ENCODE measurements at regions of chr13 and their contacts with region 1.

Region 1: DNA sequence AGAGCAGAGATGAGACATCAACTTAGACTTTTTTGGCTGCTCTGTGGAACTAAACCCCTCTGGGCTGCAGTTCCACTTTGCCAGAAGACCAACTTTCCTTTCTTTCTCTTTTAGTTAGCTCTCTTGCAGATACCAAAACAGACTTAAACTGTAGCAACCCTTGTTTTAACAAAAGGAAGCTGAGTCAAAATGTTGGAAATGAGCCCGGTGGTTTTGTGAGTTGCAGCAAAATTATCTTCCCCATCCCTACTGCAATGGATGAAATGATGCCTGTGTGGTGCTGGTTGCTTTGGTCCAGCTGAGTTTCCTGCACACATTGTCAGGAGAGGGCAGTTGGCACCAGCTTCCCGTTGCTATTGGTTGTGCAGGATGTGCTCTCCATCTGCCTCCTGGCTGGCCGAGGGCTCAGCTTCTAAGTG is 115.3 kb downstream of the LRCH1 start:
- DNase-seq: peak in 1 of 9 experiments; percentile 41
- ATAC-seq: peak; percentile 24
- H3K4me3 ChIP-seq: peak overlapping the region; percentile 51 to 58
- H3K4me3 Mint-ChIP-seq: peak overlapping the region; percentile 84
- H3K27ac ChIP-seq: peak overlapping the region; percentile 45 to 79
- H3K27ac Mint-ChIP-seq: peak overlapping the region; percentile 89
- H3K4me1 ChIP-seq: peaks cover 25% of the 10 kb centered on the region
- H3K4me1 Mint-ChIP-seq: peaks cover 39% of the 10 kb centered on the region
- H3K27me3 ChIP-seq: no peaks in the 10 kb centered on the region
- H3K27me3 Mint-ChIP-seq: no peaks in the 10 kb centered on the region
- CTCF ChIP-seq: no peak

Region 2: DNA sequence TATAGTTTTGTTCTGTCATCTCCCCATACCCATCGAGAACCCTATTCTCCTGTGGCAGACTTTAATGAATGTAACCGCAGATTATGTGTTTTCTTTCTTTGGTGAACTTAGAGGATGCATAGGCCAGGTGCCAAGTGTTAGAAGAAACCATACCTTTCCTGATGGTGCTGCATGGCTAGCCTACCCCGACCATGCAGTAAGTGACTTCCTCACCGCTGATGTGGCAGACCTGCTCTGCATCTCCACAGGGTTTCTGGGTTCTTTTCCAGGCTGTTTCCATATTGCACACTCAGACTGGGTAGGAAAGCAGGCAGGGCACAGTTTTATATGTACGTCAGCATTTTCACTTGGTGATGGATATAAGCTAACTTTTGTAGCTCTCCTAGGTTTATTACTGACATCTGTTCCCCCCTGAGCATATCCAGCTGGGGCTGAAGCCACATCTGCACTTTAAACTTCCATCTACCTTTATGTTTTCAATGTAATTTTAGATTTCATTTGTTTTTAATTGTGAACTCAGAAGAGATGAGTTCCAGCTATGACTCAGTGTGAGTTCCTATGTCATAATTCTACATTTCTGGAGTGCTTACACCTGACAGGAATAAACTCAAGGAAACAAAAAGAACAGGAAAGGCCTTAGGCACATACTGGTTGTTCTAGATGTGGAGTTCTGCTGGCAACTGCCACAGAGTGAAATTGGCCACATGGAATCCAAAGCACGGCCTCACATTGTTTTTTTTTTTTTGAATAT is 73.0 kb before region 1 on chr13:
- CTCF ChIA-PET with region 1: no interaction called
- POLR2A ChIA-PET with region 1: no interaction called
- intact Hi-C with region 1: loop called (anchors 5 to 10 kb)
- DNase-seq: no peak
- ATAC-seq: no peak
- H3K4me3 ChIP-seq: no peak overlapping the region
- H3K4me3 Mint-ChIP-seq: no peak overlapping the region
- H3K27ac ChIP-seq: no peak overlapping the region
- H3K27ac Mint-ChIP-seq: no peak overlapping the region
- H3K4me1 ChIP-seq: peaks cover 58% of the 10 kb centered on the region
- H3K4me1 Mint-ChIP-seq: peaks cover 90% of the 10 kb centered on the region
- H3K27me3 ChIP-seq: no peaks in the 10 kb centered on the region
- H3K27me3 Mint-ChIP-seq: no peaks in the 10 kb centered on the region
- CTCF ChIP-seq: no peak

Region 3: DNA sequence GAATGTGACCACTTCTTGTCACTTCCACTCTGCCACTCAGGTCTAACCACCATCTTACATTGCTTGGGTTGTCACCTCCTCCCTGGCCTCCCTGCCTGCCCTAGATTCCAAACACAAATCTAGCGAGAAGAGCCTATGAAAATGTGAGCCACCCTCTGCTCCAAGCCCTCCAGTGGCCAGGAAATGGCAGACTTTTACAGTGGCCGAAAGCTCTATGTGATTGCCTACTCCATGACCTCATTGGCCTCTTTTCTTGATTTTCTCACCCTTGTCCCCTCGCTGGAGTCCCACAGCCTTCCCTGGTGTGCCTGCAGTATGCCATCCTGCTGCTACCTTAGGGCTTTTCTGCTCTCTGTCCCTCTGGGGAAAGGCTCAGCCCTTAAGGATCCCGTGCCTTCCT is 31.1 kb before region 1 on chr13:
- CTCF ChIA-PET with region 1: no interaction called
- POLR2A ChIA-PET with region 1: no interaction called
- intact Hi-C with region 1: no loop called
- DNase-seq: no peak
- ATAC-seq: no peak
- H3K4me3 ChIP-seq: no peak overlapping the region
- H3K4me3 Mint-ChIP-seq: no peak overlapping the region
- H3K27ac ChIP-seq: no peak overlapping the region
- H3K27ac Mint-ChIP-seq: no peak overlapping the region
- H3K4me1 ChIP-seq: no peaks in the 10 kb centered on the region
- H3K4me1 Mint-ChIP-seq: peaks cover 45% of the 10 kb centered on the region
- H3K27me3 ChIP-seq: no peaks in the 10 kb centered on the region
- H3K27me3 Mint-ChIP-seq: no peaks in the 10 kb centered on the region
- CTCF ChIP-seq: no peak

Region 4: DNA sequence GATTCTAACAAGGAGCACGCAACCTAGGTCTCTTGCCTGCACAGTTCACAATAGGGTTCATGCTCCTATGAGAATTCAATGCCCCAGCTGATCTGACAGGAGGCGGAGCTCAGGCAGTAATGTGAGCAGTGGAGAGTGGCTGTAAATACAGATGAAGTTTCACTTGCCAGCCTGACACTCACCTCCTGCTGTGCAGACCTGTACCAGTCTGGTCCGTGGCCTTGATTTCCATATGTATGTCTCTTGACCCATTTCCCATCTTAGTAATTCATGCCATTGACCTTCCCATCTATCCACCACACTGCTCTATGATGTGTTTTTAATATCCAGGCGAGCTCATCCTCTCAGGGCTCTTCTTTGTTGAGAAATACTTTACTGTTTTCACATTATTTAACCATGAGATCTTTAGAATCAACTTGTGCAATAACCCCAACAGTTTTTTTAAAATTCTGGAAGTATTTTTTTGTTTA is 20.1 kb before region 1 on chr13:
- CTCF ChIA-PET with region 1: no interaction called
- POLR2A ChIA-PET with region 1: no interaction called
- intact Hi-C with region 1: loop called in 1 of 2 experiments (anchors 2 kb)
- DNase-seq: peak in 1 of 9 experiments; percentile 15
- ATAC-seq: no peak
- H3K4me3 ChIP-seq: no peak overlapping the region
- H3K4me3 Mint-ChIP-seq: no peak overlapping the region
- H3K27ac ChIP-seq: no peak overlapping the region
- H3K27ac Mint-ChIP-seq: no peak overlapping the region
- H3K4me1 ChIP-seq: peaks cover 5% of the 10 kb centered on the region
- H3K4me1 Mint-ChIP-seq: peaks cover 57% of the 10 kb centered on the region
- H3K27me3 ChIP-seq: no peaks in the 10 kb centered on the region
- H3K27me3 Mint-ChIP-seq: no peaks in the 10 kb centered on the region
- CTCF ChIP-seq: no peak

Region 5: DNA sequence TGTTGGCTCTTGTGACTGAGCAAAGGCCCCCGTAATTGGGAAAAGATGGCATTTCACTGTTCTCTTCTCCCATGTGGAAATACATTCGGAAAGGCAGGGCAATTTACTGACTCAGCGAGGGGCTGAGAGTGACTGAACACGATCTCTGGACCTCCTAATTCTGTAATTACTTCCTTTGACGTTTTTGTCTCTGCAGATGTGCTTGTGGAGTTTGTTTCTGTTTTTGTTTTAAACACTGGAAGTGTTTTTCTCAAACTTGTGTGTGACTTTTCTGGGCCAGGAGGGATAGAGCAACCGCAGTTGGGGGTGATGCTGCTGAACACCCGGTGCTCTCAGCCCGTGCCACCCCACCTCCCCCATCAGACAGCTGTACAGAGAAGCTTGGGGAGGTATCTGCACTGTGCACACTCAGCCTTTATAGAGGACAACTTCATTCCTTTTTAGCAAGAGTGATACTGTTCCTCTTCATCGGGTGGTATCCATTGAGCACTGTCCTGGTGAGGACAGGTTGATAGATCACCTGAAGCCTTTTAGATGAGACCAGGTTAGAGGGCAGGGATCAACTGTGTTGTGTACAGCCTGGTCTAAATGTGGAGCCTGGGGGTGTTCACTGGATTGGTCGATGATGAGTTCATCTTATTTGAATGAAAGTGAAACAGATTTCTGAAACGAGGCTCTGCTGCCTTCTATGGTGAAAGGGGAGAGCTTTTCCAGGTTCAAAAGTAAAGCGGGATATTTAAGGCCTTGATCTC is 11.2 kb after region 1 on chr13:
- CTCF ChIA-PET with region 1: interaction called, 4 read pairs
- POLR2A ChIA-PET with region 1: no interaction called
- intact Hi-C with region 1: loop called in 1 of 2 experiments (anchors 1 kb)
- DNase-seq: peak in 8 of 9 experiments; percentile 12 to 79 (median 38)
- ATAC-seq: peak; percentile 92
- H3K4me3 ChIP-seq: peak overlapping the region; percentile 25 to 33
- H3K4me3 Mint-ChIP-seq: no peak overlapping the region
- H3K27ac ChIP-seq: peak overlapping the region; percentile 56 to 73
- H3K27ac Mint-ChIP-seq: no peak overlapping the region
- H3K4me1 ChIP-seq: peaks cover 18% of the 10 kb centered on the region
- H3K4me1 Mint-ChIP-seq: peaks cover 5% of the 10 kb centered on the region
- H3K27me3 ChIP-seq: no peaks in the 10 kb centered on the region
- H3K27me3 Mint-ChIP-seq: no peaks in the 10 kb centered on the region
- CTCF ChIP-seq: no peak

Region 6: DNA sequence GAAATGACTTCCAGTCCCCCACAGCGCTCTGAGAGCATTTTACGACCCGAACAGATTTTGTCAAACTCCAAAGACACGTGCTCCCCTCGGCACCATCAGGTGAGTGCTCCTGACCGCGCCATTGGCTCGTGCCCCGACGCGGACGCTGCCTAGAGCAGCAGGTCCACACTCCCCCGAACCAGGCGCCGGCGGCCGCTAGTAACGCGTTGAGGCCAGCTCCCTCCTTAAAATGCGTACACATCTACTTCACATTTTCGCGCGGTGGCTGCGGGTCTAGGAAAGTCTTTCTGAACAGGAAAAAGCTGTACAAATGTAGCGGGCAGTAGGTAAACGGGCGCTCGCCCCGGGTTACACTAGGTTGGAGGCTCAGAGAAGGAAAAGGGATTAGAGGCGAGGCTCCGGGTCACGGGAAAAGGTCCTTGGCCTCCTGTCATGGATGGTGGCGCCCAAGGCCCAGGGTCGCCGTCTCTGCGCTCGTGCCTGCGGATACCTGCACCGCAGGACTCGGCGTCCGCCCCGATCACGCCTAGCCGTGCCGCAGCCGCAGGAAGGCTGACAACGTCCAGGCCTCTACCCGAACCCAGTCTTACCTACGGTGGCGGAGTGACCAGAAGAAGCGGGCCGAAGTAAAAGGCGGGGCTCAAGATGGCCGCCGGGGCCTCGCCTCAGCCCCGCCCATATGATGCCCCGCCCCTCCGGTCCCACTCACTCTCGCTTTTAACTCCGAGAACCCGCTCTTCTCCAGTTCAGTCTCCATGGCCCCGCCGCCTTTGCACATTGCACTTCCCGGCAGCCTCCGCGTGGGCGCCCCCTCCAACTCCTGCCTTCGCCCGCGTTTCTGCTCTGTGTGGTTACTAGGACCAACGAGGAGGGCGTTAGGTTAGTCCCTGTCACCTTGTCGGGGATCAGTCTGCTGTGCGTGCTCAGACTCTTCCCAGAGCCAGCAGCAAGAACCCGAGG is 128.5 kb after region 1 on chr13 and contains the start of gene ESD:
- CTCF ChIA-PET with region 1: no interaction called
- POLR2A ChIA-PET with region 1: no interaction called
- intact Hi-C with region 1: loop called in 1 of 2 experiments (anchors 5 kb)
- DNase-seq: peak; percentile 74 to 92 (median 89)
- ATAC-seq: peak; percentile 94
- H3K4me3 ChIP-seq: peak within 1 kb of the TSS; percentile 76 to 93
- H3K4me3 Mint-ChIP-seq: peak within 1 kb of the TSS; percentile 99
- H3K27ac ChIP-seq: peak within 1 kb of the TSS; percentile 71 to 77
- H3K27ac Mint-ChIP-seq: peak within 1 kb of the TSS; percentile 99
- H3K4me1 ChIP-seq: peaks cover 35% of the 10 kb centered on the region
- H3K4me1 Mint-ChIP-seq: peaks cover 44% of the 10 kb centered on the region
- H3K27me3 ChIP-seq: no peaks in the 10 kb centered on the region
- H3K27me3 Mint-ChIP-seq: no peaks in the 10 kb centered on the region
- CTCF ChIP-seq: no peak
- total RNA-seq, gene ESD: 30.5 to 31.0 TPM

Measured in CD8-positive, alpha-beta T cell (primary cell).